PC-3 (cell line): ENCODE measurements at regions of chr3 and their contacts with region 1.

Region 1: GRCh38 chr3:84318273-84318809 is 640.4 kb upstream of the CADM2 start:
- DNase-seq: peak; percentile 92
- ATAC-seq: peak; percentile 99
- H3K4me3 ChIP-seq: no peak overlapping the region
- H3K27ac ChIP-seq: peak overlapping the region; percentile 74
- H3K4me1 ChIP-seq: peaks cover 17% of the 10 kb centered on the region
- H3K27me3 ChIP-seq: no peaks in the 10 kb centered on the region
- CTCF ChIP-seq: peak; percentile 66

Region 2: GRCh38 chr3:83890039-83890762 is 428.1 kb before region 1 on chr3:
- CTCF ChIA-PET with region 1: no interaction called
- POLR2A ChIA-PET with region 1: no interaction called
- intact Hi-C with region 1: loop called (anchors 1 kb)
- DNase-seq: peak; percentile 85
- ATAC-seq: peak; percentile 74
- H3K4me3 ChIP-seq: no peak overlapping the region
- H3K27ac ChIP-seq: peak overlapping the region; percentile 97
- H3K4me1 ChIP-seq: peaks cover 53% of the 10 kb centered on the region
- H3K27me3 ChIP-seq: no peaks in the 10 kb centered on the region
- CTCF ChIP-seq: no peak

Region 3: DNA sequence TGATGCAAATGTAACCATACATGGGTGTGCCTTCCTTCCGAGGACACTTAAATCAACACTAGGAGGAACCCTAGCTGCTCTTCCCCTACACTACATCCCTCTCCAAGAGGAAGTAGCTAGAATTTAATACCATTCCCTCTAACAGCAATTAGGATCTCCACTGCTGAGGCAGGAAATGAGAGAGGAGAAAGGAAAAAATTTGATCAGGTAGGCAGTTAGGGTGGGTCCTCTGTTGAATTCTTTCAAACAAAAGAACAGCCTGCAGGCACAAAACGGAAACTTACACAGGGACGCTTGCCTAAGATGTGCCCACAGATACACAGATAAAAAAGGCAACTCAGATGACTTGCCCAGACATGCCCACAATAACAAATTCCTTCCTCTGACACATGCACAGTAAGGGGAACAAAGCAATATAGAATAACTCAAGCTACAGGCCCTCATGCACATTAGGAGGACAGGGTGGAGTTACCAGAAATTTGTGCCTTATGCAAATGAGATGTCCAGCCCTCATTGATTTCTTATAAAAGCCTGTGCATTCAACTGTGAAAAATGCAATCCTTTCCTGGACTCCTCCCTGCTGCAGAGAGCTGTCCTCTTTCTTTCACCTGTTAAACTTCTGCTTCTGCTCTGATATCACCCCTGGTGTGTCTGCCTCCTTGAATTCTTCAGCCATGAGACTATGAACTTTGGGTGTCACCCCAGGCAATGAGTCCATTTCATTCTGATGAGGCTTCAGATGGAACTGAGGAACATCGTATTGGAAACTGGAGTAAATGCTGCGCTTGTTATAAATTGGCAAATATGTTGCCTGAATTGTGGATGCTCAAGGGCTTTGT is 383.8 kb before region 1 on chr3:
- CTCF ChIA-PET with region 1: no interaction called
- POLR2A ChIA-PET with region 1: no interaction called
- intact Hi-C with region 1: loop called (anchors 5 kb)
- DNase-seq: peak; percentile 96
- ATAC-seq: peak; percentile 84
- H3K4me3 ChIP-seq: no peak overlapping the region; the same call in 1 of the 2 replicates
- H3K27ac ChIP-seq: peak overlapping the region; percentile 92
- H3K4me1 ChIP-seq: peaks cover 33% of the 10 kb centered on the region
- H3K27me3 ChIP-seq: no peaks in the 10 kb centered on the region
- CTCF ChIP-seq: 0 out of 2 replicates have a peak, but pooled peaks have one; percentile 35

Region 4: DNA sequence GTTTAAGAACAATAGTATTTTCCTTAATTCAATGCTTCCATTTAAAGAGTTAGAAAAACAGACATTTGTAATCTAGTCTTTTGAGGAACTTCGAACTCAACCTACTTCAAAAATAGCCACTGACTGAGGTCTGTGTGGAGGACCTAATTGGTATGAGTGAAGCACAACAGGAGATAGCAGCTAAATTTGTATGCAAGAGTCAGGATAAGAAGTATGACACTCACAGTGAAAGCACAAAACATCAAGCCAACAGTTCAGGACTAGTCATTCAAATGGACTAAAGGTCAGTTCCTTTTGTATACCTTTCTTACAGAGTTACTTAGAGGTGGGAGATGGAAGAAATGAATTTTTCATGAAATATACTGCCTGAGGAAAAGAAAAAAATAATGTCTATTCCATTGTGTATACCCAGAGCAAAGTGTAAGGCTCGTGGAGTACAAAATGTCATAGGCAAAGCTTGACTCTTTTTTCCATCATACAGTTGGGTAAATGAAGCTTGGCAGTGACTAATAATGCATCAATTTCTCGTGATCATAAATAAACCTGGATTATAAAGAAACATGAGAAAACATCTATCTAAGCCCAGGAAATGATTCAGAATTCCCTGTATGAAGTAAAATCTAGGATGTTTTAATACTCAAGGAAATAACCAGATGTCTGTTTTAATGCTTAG is 364.8 kb before region 1 on chr3:
- CTCF ChIA-PET with region 1: no interaction called
- POLR2A ChIA-PET with region 1: no interaction called
- intact Hi-C with region 1: loop called (anchors 5 kb)
- DNase-seq: peak; percentile 85
- ATAC-seq: peak; percentile 96
- H3K4me3 ChIP-seq: peak overlapping the region; percentile 8; the same call in 1 of the 2 replicates
- H3K27ac ChIP-seq: peak overlapping the region; percentile 85
- H3K4me1 ChIP-seq: peaks cover 19% of the 10 kb centered on the region
- H3K27me3 ChIP-seq: no peaks in the 10 kb centered on the region
- CTCF ChIP-seq: no peak

Region 5: DNA sequence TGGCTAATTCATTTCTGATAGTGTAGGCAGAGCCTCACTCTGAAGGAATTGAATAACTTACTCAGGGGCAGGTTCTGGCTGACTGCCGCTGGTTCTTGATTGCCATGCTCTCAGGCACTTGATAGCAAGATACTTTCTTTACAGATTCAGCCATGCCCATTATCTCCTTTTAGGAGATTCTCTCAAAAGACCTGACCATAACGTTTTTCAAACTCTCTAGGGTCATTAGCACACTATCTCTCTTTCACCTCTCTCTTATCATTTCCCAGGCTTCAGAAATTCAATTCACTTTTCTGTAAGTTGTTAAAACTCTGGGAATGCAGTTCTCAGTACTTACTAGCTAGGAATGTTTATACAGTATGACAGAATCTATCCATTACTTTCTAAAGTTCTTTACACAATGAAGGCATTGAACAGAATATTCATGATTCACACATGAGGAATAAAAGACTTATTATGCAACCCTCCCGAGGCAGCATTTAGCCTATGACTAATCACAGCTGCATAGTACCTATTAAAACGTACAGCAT is 209.8 kb before region 1 on chr3:
- CTCF ChIA-PET with region 1: no interaction called
- POLR2A ChIA-PET with region 1: no interaction called
- intact Hi-C with region 1: loop called (anchors 1 kb)
- DNase-seq: peak; percentile 96
- ATAC-seq: peak; percentile 97
- H3K4me3 ChIP-seq: peak overlapping the region; percentile 50
- H3K27ac ChIP-seq: peak overlapping the region; percentile 95
- H3K4me1 ChIP-seq: peaks cover 42% of the 10 kb centered on the region
- H3K27me3 ChIP-seq: no peaks in the 10 kb centered on the region
- CTCF ChIP-seq: no peak

Region 6: DNA sequence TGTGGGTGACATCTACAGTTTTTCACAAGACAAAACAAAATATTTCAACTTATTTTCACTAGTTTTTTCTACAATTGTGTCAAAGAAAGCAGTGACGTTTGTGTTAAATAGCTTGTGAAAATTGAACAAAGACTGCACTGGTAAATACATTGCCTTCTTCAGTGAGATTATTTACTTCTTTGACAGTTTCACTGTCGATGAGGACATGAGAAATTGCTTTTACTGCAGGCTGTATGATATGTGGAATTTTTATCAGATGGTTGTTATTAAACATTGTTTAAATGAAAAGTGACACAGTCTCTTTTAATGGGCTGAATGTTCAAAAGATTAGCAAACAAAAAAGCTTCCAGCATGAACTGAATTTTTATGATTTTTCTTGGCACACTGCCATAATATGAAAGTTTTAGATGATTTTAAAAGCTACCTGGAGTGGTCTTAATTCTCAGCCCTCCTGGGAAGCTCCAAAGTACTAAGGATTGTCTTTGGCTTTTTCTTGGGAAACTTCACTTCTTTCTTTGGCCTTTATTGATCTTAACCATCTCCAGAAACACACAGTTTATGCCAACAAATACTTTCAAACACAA is 133.3 kb before region 1 on chr3:
- CTCF ChIA-PET with region 1: no interaction called
- POLR2A ChIA-PET with region 1: no interaction called
- intact Hi-C with region 1: loop called (anchors 5 kb)
- DNase-seq: peak; percentile 40
- ATAC-seq: peak; percentile 78
- H3K4me3 ChIP-seq: no peak overlapping the region
- H3K27ac ChIP-seq: peak overlapping the region; percentile 22
- H3K4me1 ChIP-seq: peaks cover 7% of the 10 kb centered on the region; the same call in 1 of the 2 replicates
- H3K27me3 ChIP-seq: no peaks in the 10 kb centered on the region
- CTCF ChIP-seq: no peak

Region 7: DNA sequence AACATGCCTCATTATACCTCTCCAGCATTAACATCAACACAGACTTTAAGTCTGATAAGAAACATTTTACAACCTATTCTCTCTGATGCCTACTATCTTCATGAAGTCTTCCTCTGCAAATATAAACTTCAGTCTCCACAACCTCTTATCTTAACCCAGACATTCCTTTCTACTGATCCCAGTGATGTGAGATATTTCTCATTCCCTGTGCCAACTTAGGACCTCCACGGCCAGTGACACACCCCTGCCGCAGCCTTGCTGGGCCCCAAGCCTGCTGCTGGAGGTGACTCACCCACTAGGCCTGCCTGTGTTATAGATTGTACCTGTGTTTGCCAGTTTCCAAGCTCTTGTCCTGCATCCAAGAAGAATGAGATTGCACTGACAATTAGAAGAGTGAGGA is 94.1 kb before region 1 on chr3:
- CTCF ChIA-PET with region 1: no interaction called
- POLR2A ChIA-PET with region 1: no interaction called
- intact Hi-C with region 1: no loop called
- DNase-seq: no peak
- ATAC-seq: no peak
- H3K4me3 ChIP-seq: no peak overlapping the region
- H3K27ac ChIP-seq: no peak overlapping the region
- H3K4me1 ChIP-seq: no peaks in the 10 kb centered on the region
- H3K27me3 ChIP-seq: no peaks in the 10 kb centered on the region
- CTCF ChIP-seq: no peak

Region 8: DNA sequence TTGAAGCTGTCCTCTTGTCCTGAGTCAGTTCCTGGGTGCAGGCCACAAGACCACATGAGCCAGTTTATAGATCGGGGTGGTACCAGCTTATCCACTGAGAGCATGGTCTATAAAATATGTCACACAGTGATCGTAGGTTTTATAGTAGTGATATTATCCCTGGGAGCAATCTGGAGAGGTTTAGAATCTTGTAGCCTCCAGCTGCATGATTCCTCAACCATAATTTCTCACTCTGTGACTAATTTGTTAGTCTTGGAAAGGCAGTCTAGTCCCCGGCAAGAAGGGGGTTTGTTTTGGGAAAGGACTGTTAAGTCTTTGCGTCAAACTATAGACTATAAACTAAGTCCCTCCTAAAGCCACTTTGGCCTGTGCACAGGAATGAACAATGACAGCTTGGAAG is 52.6 kb before region 1 on chr3:
- CTCF ChIA-PET with region 1: no interaction called
- POLR2A ChIA-PET with region 1: no interaction called
- intact Hi-C with region 1: loop called (anchors 1 kb)
- DNase-seq: peak; percentile 93
- ATAC-seq: peak; percentile 98
- H3K4me3 ChIP-seq: no peak overlapping the region
- H3K27ac ChIP-seq: peak overlapping the region; percentile 98
- H3K4me1 ChIP-seq: peaks cover 14% of the 10 kb centered on the region
- H3K27me3 ChIP-seq: no peaks in the 10 kb centered on the region
- CTCF ChIP-seq: no peak

Region 9: GRCh38 chr3:84304214-84304613 is 14.1 kb before region 1 on chr3:
- CTCF ChIA-PET with region 1: no interaction called
- POLR2A ChIA-PET with region 1: no interaction called
- intact Hi-C with region 1: no loop called
- DNase-seq: no peak
- ATAC-seq: no peak
- H3K4me3 ChIP-seq: no peak overlapping the region
- H3K27ac ChIP-seq: no peak overlapping the region
- H3K4me1 ChIP-seq: no peaks in the 10 kb centered on the region
- H3K27me3 ChIP-seq: no peaks in the 10 kb centered on the region
- CTCF ChIP-seq: no peak

Region 10: DNA sequence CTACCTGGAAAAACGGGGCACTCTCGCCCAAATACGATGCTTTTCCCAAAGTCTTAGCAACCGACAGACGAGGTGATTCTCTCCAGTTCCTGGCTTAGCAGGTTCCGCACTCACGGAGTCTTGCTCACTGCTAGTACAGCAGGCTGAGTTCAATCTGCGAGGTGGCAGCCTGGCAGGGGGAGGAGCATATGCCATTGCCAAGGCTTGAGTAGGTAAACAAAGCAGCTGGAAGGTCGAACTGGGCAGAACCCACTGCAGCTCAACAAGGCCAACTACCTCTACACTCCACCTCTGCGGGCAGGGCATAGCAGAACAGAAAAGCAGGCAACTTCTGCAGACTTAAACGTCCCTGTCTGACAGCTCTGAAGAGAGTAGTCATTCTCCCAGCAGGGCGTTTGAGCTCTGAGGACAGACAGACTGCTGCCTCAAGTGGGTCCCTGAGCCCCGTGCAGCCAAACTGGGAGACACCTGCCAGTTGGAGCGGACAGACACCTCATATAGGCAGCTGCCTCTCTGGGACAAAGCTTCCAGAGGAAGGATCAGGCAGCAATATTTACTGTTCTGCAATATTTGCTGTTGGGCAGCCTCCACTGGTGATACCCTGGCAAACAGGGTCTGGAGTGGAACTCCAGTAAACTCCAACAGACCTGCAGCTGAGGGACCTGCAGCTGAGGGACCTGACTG is 567.0 kb after region 1 on chr3:
- CTCF ChIA-PET with region 1: no interaction called
- POLR2A ChIA-PET with region 1: no interaction called
- intact Hi-C with region 1: no loop called
- DNase-seq: no peak
- ATAC-seq: no peak
- H3K4me3 ChIP-seq: no peak overlapping the region
- H3K27ac ChIP-seq: no peak overlapping the region
- H3K4me1 ChIP-seq: no peaks in the 10 kb centered on the region
- H3K27me3 ChIP-seq: no peaks in the 10 kb centered on the region
- CTCF ChIP-seq: no peak